Activated T-helper 1 cell treated with anti-CD3 and anti-CD28 coated beads, Interleukin-12 subunit alpha, Interleukin-12 subunit beta, Interleukin-2, Interleukin-4 antibody, amounts not matched to agents 30 ng/mL and 10 ng/mL and 1 ng/mL, durations not matched to agents 14 hours and 24 hours and 36 hours (primary cell): ENCODE measurements at regions of chr10 and their contacts with region 1.

Region 1: DNA sequence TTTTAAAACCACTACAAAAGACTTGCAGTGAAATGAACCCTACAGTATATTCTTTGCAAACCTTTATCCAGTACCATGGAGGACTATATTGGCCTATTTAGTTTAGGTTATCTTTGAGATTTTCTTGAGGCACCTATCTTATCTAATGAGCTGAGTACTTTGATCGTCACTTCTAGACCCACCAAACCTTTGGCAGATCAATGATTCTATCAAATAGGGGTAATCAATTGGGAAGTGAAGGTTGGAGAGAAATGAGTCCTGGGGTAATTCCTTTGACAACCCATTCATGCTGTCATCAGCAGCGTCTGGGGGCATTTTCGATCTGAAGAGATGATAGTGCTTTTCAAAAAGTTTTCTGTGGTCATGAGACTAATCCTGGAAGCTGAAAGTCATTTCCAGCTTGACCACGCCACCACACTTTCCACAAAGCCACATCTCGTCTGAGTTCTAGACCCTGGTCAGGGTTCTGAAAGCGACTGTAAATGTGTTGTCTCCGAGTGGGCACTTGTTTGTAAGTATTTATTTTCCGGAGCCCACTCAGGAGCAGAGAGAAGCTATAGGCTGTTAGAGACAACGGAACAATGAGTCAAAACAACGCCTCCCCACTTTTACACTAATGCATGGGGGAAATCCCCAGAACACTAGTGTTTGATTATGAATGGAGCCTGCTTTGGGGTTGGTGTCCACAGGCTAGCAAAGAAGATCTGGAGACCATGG is 4.8 kb downstream of the EGR2 start:
- DNase-seq: peak; percentile 71
- H3K4me3 Mint-ChIP-seq: peak overlapping the region; percentile 98
- H3K27ac Mint-ChIP-seq: peak overlapping the region; percentile 94
- H3K4me1 Mint-ChIP-seq: peaks cover 84% of the 10 kb centered on the region
- H3K27me3 Mint-ChIP-seq: peaks cover 8% of the 10 kb centered on the region

Region 2: GRCh38 chr10:62528441-62528840 is 282.9 kb before region 1 on chr10:
- intact Hi-C with region 1: loop called (anchors 1 kb)
- DNase-seq: no peak
- H3K4me3 Mint-ChIP-seq: no peak overlapping the region
- H3K27ac Mint-ChIP-seq: peak overlapping the region; percentile 1
- H3K4me1 Mint-ChIP-seq: peaks cover 33% of the 10 kb centered on the region
- H3K27me3 Mint-ChIP-seq: peaks cover 9% of the 10 kb centered on the region

Region 3: DNA sequence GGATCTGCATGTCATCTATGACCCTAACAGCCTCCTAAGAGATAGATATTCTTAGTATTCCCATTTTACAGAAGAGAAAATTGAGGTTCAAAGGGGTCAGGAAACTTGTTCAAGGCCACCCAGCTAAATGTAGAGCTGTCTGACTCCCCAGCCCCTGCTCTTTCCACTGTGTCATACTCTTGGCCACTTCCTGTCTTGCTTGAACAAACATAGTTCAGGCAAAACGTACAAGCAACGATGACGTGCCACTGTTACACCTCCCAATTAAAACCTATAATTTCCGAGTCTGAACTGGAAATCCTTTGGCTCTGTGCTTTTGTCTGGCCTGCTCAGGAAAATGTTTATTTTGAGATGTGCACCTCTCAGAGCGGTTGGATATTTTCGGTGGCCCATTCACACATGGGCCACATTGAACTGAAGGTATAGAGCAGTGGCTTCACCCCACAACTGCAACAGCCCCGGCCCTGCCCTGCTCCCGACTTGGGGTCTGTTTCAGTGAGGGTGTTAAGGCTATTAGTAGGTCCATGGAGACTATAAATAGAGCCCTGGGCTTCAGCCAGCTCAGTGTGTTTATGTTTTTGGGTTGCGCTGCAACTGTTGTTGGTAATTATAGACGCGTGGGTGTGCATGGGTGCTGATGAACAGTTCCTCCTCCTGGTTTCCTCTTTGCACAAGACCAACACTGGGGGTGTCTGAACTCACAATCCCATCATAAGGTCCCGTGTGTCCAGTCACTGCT is 179.1 kb before region 1 on chr10:
- intact Hi-C with region 1: loop called (anchors 1 kb)
- DNase-seq: peak; percentile 59
- H3K4me3 Mint-ChIP-seq: peak overlapping the region; percentile 42
- H3K27ac Mint-ChIP-seq: peak overlapping the region; percentile 95
- H3K4me1 Mint-ChIP-seq: peaks cover 29% of the 10 kb centered on the region
- H3K27me3 Mint-ChIP-seq: no peaks in the 10 kb centered on the region

Region 4: GRCh38 chr10:62726142-62726541 is 85.2 kb before region 1 on chr10:
- intact Hi-C with region 1: loop called (anchors 1 kb)
- DNase-seq: peak; percentile 16
- H3K4me3 Mint-ChIP-seq: peak overlapping the region; percentile 25
- H3K27ac Mint-ChIP-seq: peak overlapping the region; percentile 72
- H3K4me1 Mint-ChIP-seq: peaks cover 52% of the 10 kb centered on the region
- H3K27me3 Mint-ChIP-seq: peaks cover 8% of the 10 kb centered on the region

Region 5: GRCh38 chr10:62992145-62992721 is 180.9 kb after region 1 on chr10:
- intact Hi-C with region 1: loop called (anchors 1 kb)
- DNase-seq: no peak
- H3K4me3 Mint-ChIP-seq: peak overlapping the region; percentile 58
- H3K27ac Mint-ChIP-seq: peak overlapping the region; percentile 94
- H3K4me1 Mint-ChIP-seq: peaks cover 52% of the 10 kb centered on the region
- H3K27me3 Mint-ChIP-seq: peaks cover 4% of the 10 kb centered on the region